H1 (cell line): ENCODE measurements at regions of chr3 and their contacts with region 1.

Region 1: GRCh38 chr3:68893600-68894239 is 38.6 kb downstream of the TAFA4 start:
- DNase-seq: no peak
- H3K4me3 ChIP-seq: no peak overlapping the region
- H3K27ac ChIP-seq: no peak overlapping the region
- H3K4me1 ChIP-seq: peaks cover 0 to 6% (median 2%) of the 10 kb centered on the region in 4 experiments; a peak in 2 of 7 replicates
- H3K27me3 ChIP-seq: no peaks in the 10 kb centered on the region
- CTCF ChIP-seq: peak in 1 of 3 experiments; percentile 14; a peak in 2 of 4 replicates
- EP300 ChIP-seq: no peak
- POLR2A ChIP-seq: no peak
- RAD21 ChIP-seq: peak; percentile 55 to 63

Region 2: DNA sequence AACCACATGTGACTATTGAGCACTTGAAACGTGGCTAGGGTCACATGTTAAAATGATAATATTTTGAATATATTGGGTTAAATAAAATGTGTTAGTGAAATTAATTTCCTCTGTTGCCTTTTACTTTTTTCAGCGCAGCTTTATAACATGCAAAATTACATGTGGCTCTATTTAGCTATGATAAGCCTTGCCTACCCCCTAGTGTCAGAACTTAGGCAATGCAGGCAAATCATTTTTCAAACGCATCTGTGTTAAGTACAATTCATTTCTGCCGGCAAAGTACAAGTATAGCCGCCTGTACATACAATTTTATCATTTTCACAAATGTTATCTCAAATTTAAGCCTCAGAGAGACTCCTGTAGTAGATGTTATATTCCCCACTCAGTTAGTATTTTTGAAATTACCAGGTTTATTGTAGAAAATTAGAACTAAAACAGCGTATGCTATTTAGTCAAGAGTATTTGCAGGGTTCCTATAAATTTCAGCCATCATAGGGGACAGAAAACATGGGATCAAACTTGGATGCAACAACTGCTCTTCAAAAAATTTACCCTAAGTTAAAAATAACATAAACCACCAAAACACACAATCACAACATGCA is 17.5 kb before region 1 on chr3:
- CTCF ChIA-PET with region 1: interaction called, 29 read pairs
- POLR2A ChIA-PET with region 1: no interaction called
- DNase-seq: peak in 1 of 2 experiments; percentile 21
- H3K4me3 ChIP-seq: no peak overlapping the region
- H3K27ac ChIP-seq: no peak overlapping the region
- H3K4me1 ChIP-seq: no peaks in the 10 kb centered on the region
- H3K27me3 ChIP-seq: no peaks in the 10 kb centered on the region
- CTCF ChIP-seq: peak in 2 of 3 experiments; percentile 65 to 76; a peak in 3 of 4 replicates
- EP300 ChIP-seq: no peak
- POLR2A ChIP-seq: no peak
- RAD21 ChIP-seq: peak; percentile 93 to 96

Region 3: GRCh38 chr3:68904064-68904463 is 10.3 kb after region 1 on chr3:
- CTCF ChIA-PET with region 1: interaction called, 15 read pairs
- POLR2A ChIA-PET with region 1: no interaction called
- DNase-seq: no peak
- H3K4me3 ChIP-seq: no peak overlapping the region
- H3K27ac ChIP-seq: no peak overlapping the region
- H3K4me1 ChIP-seq: peaks cover 0 to 5% (median 2%) of the 10 kb centered on the region in 4 experiments; a peak in 2 of 7 replicates
- H3K27me3 ChIP-seq: no peaks in the 10 kb centered on the region
- CTCF ChIP-seq: no peak
- EP300 ChIP-seq: no peak
- POLR2A ChIP-seq: no peak
- RAD21 ChIP-seq: no peak

Region 4: GRCh38 chr3:68909719-68910118 is 16.0 kb after region 1 on chr3:
- CTCF ChIA-PET with region 1: interaction called, 15 read pairs
- POLR2A ChIA-PET with region 1: no interaction called
- DNase-seq: no peak
- H3K4me3 ChIP-seq: no peak overlapping the region
- H3K27ac ChIP-seq: no peak overlapping the region
- H3K4me1 ChIP-seq: peaks cover 0 to 6% (median 4%) of the 10 kb centered on the region in 4 experiments; a peak in 2 of 7 replicates
- H3K27me3 ChIP-seq: no peaks in the 10 kb centered on the region
- CTCF ChIP-seq: no peak
- EP300 ChIP-seq: no peak
- POLR2A ChIP-seq: no peak
- RAD21 ChIP-seq: no peak

Region 5: DNA sequence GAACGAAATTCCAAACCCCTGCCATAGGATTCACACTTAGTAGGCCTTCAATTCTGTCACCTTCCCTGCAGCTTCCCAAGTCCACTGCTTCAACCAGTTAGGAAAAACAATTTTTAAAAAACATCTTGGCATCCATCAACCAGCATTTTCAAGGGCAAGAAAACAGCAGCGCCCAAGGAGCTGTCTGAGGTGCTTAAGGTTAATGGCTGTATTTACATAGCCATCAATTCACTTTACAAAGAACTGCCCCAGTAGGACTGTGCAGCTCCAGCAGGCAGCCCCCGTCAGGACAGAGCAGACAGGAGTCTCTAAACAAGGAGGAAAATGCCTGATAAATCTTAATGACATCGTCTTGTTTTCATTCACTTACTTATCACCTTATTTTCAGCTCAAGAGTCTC is 25.3 kb after region 1 on chr3:
- CTCF ChIA-PET with region 1: interaction called, 17 read pairs
- POLR2A ChIA-PET with region 1: no interaction called
- DNase-seq: peak; percentile 15 to 51
- H3K4me3 ChIP-seq: no peak overlapping the region
- H3K27ac ChIP-seq: no peak overlapping the region
- H3K4me1 ChIP-seq: peaks cover 0 to 5% (median 0%) of the 10 kb centered on the region in 4 experiments; a peak in 1 of 7 replicates
- H3K27me3 ChIP-seq: no peaks in the 10 kb centered on the region
- CTCF ChIP-seq: no peak
- EP300 ChIP-seq: no peak
- POLR2A ChIP-seq: no peak
- RAD21 ChIP-seq: no peak

Region 6: DNA sequence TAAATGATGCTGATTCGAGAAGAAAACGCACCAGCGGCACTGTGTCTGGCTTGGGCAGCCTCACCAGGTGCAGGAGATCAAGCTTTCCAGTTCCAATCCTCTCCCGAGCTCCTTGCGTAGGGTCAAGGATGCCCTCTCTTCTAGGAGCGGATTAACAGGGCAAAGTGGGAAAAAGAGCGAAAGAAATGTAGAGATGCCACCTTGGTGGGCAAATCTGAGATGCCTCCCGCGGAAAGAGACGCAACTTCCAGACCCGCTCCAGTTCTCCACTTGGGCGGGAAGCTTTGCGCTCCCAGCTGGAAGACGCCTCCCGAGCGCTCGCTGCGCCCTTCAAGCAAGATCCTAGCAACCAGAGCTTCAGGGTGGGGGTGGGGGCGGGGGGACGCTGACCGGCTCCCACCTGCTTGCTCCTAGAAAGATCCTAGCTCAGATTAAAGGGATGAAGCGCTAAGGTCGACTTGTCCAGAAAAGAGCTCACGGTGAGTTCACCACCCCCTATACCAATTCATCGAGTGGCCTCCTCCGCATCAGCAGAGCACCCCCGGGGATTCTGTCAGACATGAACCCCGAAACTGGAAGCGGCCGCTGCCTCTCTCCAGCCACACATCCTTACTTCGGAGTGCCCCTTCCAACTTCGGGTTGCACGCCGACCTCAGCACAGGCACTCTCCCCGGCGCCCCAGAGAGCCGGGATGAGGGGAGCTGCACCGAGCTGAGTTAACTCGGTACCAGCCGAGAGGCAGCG is 37.9 kb after region 1 on chr3:
- CTCF ChIA-PET with region 1: interaction called, 17 read pairs
- POLR2A ChIA-PET with region 1: interaction called, 4 read pairs
- DNase-seq: peak in 1 of 2 experiments; percentile 69
- H3K4me3 ChIP-seq: peak overlapping the region; percentile 56 to 86 (median 64)
- H3K27ac ChIP-seq: no peak overlapping the region
- H3K4me1 ChIP-seq: peaks cover 0 to 4% (median 3%) of the 10 kb centered on the region in 4 experiments; a peak in 2 of 7 replicates
- H3K27me3 ChIP-seq: peaks cover 18 to 25% (median 19%) of the 10 kb centered on the region in 4 experiments; a peak in 6 of 7 replicates
- CTCF ChIP-seq: no peak
- EP300 ChIP-seq: no peak
- POLR2A ChIP-seq: no peak
- RAD21 ChIP-seq: no peak

Region 7: GRCh38 chr3:68972358-68972979 is 78.7 kb after region 1 on chr3:
- CTCF ChIA-PET with region 1: interaction called, 51 read pairs
- POLR2A ChIA-PET with region 1: interaction called, 3 read pairs
- DNase-seq: peak; percentile 53 to 85
- H3K4me3 ChIP-seq: no peak overlapping the region
- H3K27ac ChIP-seq: no peak overlapping the region
- H3K4me1 ChIP-seq: peaks cover 0 to 2% (median 0%) of the 10 kb centered on the region in 4 experiments; a peak in 1 of 7 replicates
- H3K27me3 ChIP-seq: no peaks in the 10 kb centered on the region
- CTCF ChIP-seq: peak; percentile 90 to 99 (median 91)
- EP300 ChIP-seq: no peak
- POLR2A ChIP-seq: no peak
- RAD21 ChIP-seq: peak; percentile 99

Region 8: DNA sequence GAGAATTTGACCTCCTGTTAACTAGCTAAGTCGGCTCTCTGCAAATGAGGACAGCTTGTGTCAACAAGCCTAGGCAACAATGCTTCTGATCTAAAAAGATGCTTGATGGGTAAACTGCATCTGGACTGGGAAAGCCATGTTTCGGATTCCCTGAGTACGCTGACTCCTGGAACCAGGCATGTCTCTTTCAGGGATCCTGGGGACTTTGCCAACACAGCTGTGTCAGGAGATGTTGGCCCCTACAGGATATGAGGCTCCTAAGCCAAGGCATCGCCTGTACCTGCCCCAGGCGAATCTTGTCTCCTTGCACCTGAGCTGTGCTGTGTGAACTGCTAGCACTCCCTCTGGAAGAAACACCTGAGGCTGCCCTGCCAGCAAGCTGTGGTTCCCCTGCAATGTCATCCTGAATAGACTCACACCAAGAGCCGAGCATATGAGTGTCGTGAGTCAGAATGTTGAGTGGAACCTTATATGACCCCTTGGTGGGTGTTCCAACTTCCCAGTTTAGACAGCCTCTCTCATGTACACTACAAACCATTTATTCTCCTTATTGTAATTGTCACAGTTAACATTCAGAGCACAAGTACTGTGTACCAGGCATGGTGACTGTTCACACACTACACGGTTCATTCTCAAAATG is 102.8 kb after region 1 on chr3:
- CTCF ChIA-PET with region 1: no interaction called
- POLR2A ChIA-PET with region 1: no interaction called
- DNase-seq: no peak
- H3K4me3 ChIP-seq: no peak overlapping the region
- H3K27ac ChIP-seq: no peak overlapping the region
- H3K4me1 ChIP-seq: no peaks in the 10 kb centered on the region
- H3K27me3 ChIP-seq: no peaks in the 10 kb centered on the region
- CTCF ChIP-seq: no peak
- EP300 ChIP-seq: no peak
- POLR2A ChIP-seq: no peak
- RAD21 ChIP-seq: no peak